AG04449 (cell line): ENCODE measurements at regions of chr2 and their contacts with region 1.

Region 1: GRCh38 chr2:64653349-64654062 is at the start of gene SERTAD2:
- DNase-seq: no peak
- H3K4me3 ChIP-seq: peak within 1 kb of the TSS; percentile 77
- CTCF ChIP-seq: no peak

Region 2: DNA sequence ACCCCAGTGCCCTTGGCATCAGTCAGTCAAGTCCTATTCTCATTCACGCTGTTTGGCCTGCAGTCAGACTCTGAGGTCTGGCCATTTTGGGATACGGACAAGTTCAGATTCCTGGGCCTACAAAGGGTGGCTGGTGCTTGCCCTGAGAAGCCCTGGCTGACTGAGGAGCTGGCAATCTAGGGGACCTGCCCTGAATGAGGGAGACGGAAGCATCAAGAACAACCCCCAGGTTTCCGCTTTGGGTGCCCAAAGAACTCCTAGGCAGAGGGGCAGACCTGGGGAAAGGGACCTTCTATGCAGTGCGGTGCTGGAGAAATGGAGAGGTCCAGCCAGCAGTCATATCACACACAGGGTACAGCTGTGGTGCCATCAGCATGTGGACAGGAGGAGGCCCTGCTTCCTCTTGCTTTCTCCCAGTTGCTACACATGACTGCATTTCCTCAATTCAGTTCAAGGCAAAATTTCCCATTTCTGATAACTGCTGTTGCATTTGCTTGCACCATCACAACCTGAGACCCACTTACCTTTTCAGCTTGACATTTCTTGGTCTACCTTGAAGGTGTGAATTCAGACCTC is 270.4 kb before region 1 on chr2:
- CTCF ChIA-PET with region 1: no interaction called
- POLR2A ChIA-PET with region 1: no interaction called
- DNase-seq: no peak
- H3K4me3 ChIP-seq: no peak overlapping the region
- CTCF ChIP-seq: no peak

Region 3: GRCh38 chr2:64543008-64543697 is 110.4 kb before region 1 on chr2:
- CTCF ChIA-PET with region 1: no interaction called
- POLR2A ChIA-PET with region 1: no interaction called
- DNase-seq: no peak
- H3K4me3 ChIP-seq: no peak overlapping the region
- CTCF ChIP-seq: no peak

Region 4: DNA sequence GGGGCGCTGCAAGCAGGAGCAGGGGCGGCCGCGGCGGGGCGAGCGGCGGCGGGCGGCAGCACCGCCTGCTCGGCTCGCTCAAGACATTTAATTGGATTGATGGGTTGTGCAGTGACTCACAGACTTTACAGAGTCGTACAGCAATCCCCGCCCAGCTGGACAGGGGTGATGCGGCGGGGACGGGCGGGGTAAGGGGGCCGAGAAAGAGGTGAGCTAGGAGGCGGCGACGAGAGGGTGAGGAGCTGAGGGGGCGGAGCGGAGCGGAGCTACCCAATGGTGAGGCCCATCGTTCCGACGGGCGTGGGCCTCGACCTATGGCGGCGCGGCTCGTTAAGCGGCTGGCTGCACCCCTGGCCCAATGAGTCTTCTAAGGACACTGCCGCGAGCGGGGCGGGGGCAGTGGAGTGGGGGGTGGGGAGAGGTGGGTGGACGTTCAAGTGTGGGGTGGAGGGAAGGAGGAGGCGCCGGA is 97.3 kb after region 1 on chr2:
- CTCF ChIA-PET with region 1: interaction called, 53 read pairs
- POLR2A ChIA-PET with region 1: interaction called, 60 read pairs
- DNase-seq: peak; percentile 97
- H3K4me3 ChIP-seq: peak overlapping the region; percentile 88
- CTCF ChIP-seq: peak; percentile 0

Region 5: GRCh38 chr2:64839844-64840243 is 186.3 kb after region 1 on chr2:
- CTCF ChIA-PET with region 1: interaction called, 4 read pairs
- POLR2A ChIA-PET with region 1: interaction called, 10 read pairs
- DNase-seq: no peak
- H3K4me3 ChIP-seq: no peak overlapping the region
- CTCF ChIP-seq: no peak

Region 6: GRCh38 chr2:64865073-64865830 is 211.7 kb after region 1 on chr2:
- CTCF ChIA-PET with region 1: interaction called, 128 read pairs
- POLR2A ChIA-PET with region 1: interaction called, 35 read pairs
- DNase-seq: no peak
- H3K4me3 ChIP-seq: peak overlapping the region; percentile 54
- CTCF ChIP-seq: peak; percentile 46